ENCODE measurements at regions of chr11 and their contacts with region 1.

Region 1: GRCh38 chr11:111283945-111284481 is 14.3 kb upstream of the POU2AF3 start:
- DNase-seq: peak; percentile 70
- H3K4me3 ChIP-seq: no peak overlapping the region
- H3K27me3 ChIP-seq: peaks cover 8% of the 10 kb centered on the region; the same call in 1 of the 2 replicates
- CTCF ChIP-seq: no peak

Region 2: GRCh38 chr11:111441443-111441842 is 157.4 kb after region 1 on chr11:
- CTCF ChIA-PET with region 1: interaction called, 87 read pairs
- POLR2A ChIA-PET with region 1: no interaction called
- DNase-seq: peak; percentile 97
- H3K4me3 ChIP-seq: no peak overlapping the region
- H3K27me3 ChIP-seq: no peaks in the 10 kb centered on the region
- CTCF ChIP-seq: no peak

Region 3: GRCh38 chr11:111446404-111447111 is 162.5 kb after region 1 on chr11:
- CTCF ChIA-PET with region 1: interaction called, 87 read pairs
- POLR2A ChIA-PET with region 1: no interaction called
- DNase-seq: no peak
- H3K4me3 ChIP-seq: no peak overlapping the region
- H3K27me3 ChIP-seq: no peaks in the 10 kb centered on the region; the same call in 1 of the 2 replicates
- CTCF ChIP-seq: peak; percentile 91